ENCODE measurements at regions of chr11 and their contacts with region 1.

Region 1: DNA sequence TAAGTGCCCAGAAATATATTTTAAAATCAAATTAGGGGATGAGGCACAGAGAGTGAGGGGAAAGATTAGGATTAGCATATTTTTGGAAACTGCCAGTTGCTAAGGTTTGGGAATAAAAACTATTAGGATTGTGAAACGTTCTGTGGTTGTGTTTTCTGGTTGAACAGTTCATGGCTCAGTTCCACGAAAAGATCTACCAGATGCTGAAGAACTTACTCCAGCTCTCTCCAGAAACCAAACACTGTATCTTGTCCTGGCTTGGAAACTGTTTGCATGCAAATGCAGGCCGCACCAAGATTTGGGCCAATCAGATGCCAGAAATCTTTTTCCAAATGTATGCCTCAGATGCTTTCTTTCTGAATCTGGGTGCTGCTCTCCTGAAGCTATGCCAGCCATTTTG is 15.3 kb downstream of the UBE4A start:
- DNase-seq: no peak
- ATAC-seq: no peak
- H3K4me3 ChIP-seq: no peak overlapping the region
- H3K27ac ChIP-seq: no peak overlapping the region
- H3K4me1 ChIP-seq: no peaks in the 10 kb centered on the region
- H3K27me3 ChIP-seq: no peaks in the 10 kb centered on the region
- CTCF ChIP-seq: no peak
- POLR2A ChIP-seq: no peak

Region 2: DNA sequence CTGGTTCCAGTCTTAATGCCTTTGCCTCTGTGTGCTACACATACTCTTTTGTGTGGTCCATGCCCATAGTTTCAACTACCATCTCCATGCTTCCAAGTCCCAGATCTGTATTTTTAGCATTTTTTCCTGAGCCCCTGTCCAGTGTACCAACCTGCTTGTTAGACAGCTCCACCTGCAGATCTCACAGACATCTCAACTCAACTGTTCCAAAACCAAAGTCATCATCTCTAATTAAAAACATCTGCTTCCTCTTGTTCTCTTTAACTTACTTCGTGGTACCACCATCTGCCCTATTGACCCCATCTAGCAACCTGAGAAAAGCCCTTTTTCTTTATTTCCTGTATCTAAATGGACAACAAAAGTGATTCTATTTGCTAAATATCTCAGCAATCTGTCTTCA is 53.0 kb after region 1 on chr11:
- intact Hi-C with region 1: no loop called
- DNase-seq: no peak
- ATAC-seq: no peak
- H3K4me3 ChIP-seq: no peak overlapping the region
- H3K27ac ChIP-seq: no peak overlapping the region
- H3K4me1 ChIP-seq: no peaks in the 10 kb centered on the region
- H3K27me3 ChIP-seq: no peaks in the 10 kb centered on the region
- CTCF ChIP-seq: no peak
- POLR2A ChIP-seq: no peak

Region 3: DNA sequence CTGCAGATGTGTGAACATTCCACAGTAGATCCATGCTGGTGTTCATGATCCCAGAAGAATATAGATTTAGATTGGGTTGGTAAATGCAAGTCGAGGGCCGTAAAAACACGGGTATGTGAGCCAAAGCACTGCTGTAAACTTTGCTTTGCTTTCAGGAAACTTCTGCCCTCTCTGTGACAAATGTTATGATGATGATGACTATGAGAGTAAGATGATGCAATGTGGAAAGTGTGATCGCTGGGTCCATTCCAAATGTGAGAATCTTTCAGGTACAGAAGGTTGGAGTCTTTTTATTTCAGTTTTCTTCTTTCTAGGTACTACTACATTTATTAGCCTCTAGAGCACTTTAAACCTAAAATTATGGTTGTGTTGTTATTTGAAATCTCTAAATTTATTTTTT is 116.3 kb after region 1 on chr11:
- intact Hi-C with region 1: loop called (anchors 5 kb)
- DNase-seq: no peak
- ATAC-seq: no peak
- H3K4me3 ChIP-seq: no peak overlapping the region
- H3K27ac ChIP-seq: no peak overlapping the region
- H3K4me1 ChIP-seq: no peaks in the 10 kb centered on the region
- H3K27me3 ChIP-seq: no peaks in the 10 kb centered on the region
- CTCF ChIP-seq: no peak
- POLR2A ChIP-seq: no peak

Measured in body of pancreas (tissue), 4 donors.